Cardiac septum (tissue), 1 donor: ENCODE measurements at regions of chr9 and their contacts with region 1.

Region 1: DNA sequence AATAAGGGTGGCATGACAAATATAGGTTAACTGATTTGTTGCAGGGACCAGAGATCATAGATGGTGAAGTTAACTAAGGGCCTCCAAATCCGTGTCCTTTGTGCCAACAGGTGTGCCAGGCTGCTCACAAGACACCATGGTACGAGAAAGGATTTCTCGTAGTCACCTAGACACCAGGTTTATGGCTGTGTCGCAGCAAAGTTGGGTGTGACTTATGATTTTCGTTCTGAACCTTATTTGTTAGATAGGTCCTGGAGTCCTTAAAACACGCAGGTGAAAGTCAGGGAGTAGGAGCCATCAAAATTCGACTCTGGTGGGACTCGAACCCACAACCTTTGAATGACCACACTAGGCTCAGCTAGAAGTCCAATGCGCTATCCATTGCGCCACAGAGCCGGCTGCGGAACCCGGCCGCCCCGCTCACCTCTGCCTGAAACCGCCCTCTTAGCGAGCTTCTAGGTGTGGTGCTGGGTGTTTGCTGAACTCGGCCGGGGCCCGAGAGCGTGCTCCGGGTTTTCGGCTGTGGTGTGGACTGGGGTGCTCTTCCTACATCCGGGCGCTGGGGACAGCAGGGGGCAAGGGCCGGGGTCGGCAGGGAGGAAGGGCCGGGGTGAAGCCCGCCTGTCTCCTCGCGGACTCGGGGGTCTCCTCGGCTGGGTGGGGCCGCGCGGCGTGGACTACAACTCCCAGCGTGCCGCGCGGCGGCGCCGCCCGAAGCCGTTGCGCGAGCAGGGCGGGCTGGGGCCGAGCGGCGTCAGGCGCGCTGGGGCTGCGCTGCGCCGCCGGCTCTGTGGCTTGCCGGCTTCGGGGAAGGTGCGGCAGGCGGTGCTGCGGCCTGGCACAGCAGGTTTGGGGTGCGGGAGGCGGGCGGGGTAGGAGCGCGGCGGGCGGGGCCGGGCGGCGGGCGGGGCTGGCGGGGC is at the start of gene SLC27A4:
- DNase-seq: peak; percentile 87
- total RNA-seq, gene SLC27A4: 17.4 TPM

Region 2: GRCh38 chr9:128191406-128192046 is 148.5 kb before region 1 on chr9 and contains the start of gene CIZ1:
- intact Hi-C with region 1: loop called (anchors 5 kb)
- DNase-seq: peak; percentile 91
- total RNA-seq, gene CIZ1: 86.1 TPM

Region 3: DNA sequence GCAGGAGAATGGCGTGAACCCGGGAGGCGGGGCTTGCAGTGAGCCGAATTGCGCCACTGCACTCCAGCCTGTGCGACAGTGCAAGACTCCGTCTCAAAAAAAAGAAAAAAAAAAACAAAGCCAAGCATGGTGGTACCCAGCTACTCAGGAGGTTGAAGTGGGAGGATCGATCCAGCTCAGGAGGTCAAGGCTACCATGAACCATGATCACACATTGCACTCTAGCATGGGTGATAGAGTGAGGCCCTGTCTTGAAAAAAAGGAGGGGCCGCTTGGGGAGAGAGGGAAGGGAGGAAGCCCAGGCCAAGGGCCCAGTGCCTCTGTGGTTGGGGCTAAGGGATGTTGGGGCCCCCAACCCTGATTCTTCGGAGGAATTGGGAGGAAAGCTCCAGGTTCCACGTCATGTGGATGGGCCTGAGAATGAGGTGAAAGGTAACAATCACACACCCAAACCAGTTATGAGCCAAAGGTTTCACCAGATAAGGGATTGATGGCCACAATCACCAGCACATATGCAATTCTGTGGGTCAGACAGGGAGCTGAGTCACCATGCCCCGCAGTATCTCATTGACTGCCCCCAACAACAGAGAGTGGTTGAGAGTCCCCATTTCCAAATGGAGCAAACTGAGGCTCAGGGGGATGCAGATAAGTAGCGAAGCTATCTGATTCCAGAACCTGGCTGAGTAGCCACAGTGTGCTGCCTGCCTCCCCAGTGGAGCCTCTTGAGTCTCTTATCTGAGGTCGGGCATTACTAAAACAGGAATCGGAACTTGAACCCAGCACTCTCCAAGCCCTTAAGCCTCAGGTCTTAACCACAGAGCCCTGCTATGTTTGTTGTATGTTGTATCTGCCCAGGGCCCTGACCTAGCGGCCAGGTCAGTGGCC is 43.5 kb before region 1 on chr9:
- intact Hi-C with region 1: loop called (anchors 1 kb)
- DNase-seq: no peak

Region 4: DNA sequence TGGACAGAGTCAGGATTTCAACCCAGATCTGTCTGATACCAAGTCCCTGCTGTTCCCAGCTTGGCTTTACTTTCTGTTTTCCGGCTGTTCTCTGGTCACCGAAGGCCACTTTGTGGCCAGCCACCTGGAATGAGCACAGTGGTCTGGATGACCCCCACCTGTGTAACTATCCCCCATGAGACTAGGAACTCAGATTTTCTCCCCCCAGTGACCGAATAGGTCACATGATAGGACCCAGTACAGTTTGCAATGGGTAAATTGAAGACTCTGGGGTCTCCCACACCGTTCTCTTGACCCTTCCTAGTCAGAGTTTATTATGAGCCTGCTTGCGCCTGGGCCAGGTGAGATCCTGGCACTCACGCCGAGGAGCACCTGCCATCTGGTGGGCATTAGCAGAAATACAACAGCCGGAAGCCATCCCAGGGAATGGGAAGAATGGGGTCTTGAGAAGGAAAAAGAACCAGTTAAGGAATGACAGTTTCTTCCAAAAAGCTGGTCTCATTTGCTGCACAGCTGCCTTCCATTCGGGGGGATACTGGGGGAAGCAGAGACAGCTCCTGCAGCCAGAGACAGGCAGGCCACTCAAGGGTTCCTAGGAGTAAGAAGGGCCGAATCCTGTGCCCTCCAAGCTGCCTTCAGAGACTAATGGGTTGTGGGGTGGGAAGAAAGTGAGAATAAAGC is 587.8 kb after region 1 on chr9:
- intact Hi-C with region 1: no loop called
- DNase-seq: no peak

Region 5: GRCh38 chr9:129550199-129550839 is 1210.3 kb after region 1 on chr9:
- intact Hi-C with region 1: no loop called
- DNase-seq: peak; percentile 92